ENCODE measurements at regions of chr13 and their contacts with region 1.

Region 1: DNA sequence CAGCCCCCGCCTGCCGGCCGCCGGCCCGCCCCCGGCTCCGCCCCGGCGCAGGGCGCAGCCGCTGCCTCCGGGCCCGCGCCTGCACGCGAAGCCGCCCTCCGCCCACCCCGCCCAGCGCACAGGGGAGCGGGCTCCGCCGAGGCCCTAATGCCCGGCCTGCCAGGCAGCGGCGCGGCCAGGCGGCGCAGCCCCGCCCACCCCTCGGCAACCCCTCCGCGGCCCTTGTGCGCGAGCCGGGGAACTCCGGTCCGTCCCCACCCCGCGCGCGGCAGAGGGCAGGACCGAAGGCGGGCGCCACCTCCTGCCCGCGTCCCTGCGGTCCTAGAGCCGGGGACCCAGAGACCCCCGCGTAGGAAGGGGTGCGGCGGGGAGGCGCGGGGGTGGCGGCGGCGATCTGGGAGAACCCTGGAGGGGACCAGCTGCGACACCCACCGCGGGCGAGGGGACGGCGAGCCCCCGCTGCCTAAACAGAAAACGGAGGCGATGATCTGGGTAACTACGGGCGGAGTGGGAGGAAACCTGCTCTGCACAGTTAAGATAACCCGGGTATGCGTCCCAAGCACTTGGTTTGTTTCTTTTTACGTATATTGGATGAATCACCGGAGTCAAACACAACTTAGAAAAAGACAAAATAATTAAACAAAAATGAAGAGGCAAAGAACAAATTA is 350 bp upstream of the USP12 start:
- DNase-seq: peak; percentile 92 to 94 (median 93)
- H3K4me3 ChIP-seq: peak overlapping the region; percentile 15 to 63
- H3K4me3 Mint-ChIP-seq: peak overlapping the region; percentile 82 to 96 (median 90)
- H3K27ac ChIP-seq: peak overlapping the region; percentile 95
- H3K27ac Mint-ChIP-seq: peak overlapping the region; percentile 84 to 99 (median 96)
- H3K4me1 ChIP-seq: peaks cover 37% of the 10 kb centered on the region
- H3K4me1 Mint-ChIP-seq: peaks cover 31 to 46% (median 39%) of the 10 kb centered on the region in 4 donors
- H3K27me3 ChIP-seq: no peaks in the 10 kb centered on the region
- H3K27me3 Mint-ChIP-seq: no peaks in the 10 kb centered on the region

Region 2: DNA sequence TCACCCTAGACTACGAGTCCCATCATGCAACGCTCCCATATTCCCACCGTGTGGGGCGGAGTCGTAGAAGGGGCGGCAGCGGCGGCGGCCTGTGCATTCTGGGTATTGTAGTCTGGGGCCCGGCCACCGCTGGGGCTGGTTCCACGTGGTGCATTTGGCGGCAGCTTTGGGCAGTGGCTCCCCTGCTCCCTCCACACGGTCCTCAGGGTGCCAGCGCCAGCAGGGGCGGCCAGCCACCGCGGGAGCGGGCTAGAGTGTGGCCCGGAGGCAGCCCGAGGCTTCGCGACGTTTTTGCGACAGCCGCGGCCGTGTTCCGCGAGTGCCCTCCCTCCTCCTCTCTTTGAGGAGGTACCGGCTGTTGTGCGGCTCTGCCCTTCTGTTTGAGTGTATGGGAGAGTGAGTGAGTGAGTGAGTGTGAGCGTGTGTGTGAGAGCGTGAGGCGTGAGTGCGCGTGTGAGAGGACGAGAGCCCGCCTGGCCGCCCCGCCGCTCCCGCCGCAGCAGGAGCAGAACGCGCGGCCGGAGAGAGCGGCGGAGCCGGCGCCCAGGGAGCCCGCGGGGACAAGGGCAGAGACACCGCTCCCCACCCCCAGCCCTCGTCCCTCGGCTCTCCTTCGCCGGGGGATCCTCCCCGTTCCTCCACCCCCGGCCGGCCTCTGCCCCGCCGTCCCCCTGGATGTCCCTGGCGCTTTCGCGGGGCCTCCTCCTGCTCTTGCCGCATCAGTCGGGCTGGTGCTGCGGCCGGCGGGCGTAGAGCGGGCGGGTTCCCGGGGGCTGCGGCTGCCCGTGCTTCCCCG is 918.0 kb before region 1 on chr13 and contains the start of gene CDK8:
- CTCF ChIA-PET with region 1: no interaction called
- POLR2A ChIA-PET with region 1: no interaction called
- intact Hi-C with region 1: loop called (anchors 5 kb)
- DNase-seq: peak; percentile 91 to 95 (median 92)
- H3K4me3 ChIP-seq: peak within 1 kb of the TSS; percentile 55 to 87
- H3K4me3 Mint-ChIP-seq: peak within 1 kb of the TSS; percentile 91 to 100 (median 94)
- H3K27ac ChIP-seq: peak within 1 kb of the TSS; percentile 58
- H3K27ac Mint-ChIP-seq: peak within 1 kb of the TSS; percentile 86 to 99 (median 93)
- H3K4me1 ChIP-seq: peaks cover 18% of the 10 kb centered on the region
- H3K4me1 Mint-ChIP-seq: peaks cover 29 to 44% (median 30%) of the 10 kb centered on the region in 4 donors
- H3K27me3 ChIP-seq: no peaks in the 10 kb centered on the region
- H3K27me3 Mint-ChIP-seq: peaks cover 0 to 1% of the 10 kb centered on the region in 2 donors
- total RNA-seq, gene CDK8: 10.4 to 11.7 TPM

Region 3: GRCh38 chr13:26996965-26997752 is 174.8 kb before region 1 on chr13:
- CTCF ChIA-PET with region 1: no interaction called
- POLR2A ChIA-PET with region 1: no interaction called
- intact Hi-C with region 1: no loop called
- DNase-seq: no peak
- H3K4me3 ChIP-seq: no peak overlapping the region
- H3K4me3 Mint-ChIP-seq: no peak overlapping the region
- H3K27ac ChIP-seq: no peak overlapping the region
- H3K27ac Mint-ChIP-seq: peak overlapping the region in 1 of 7 donors; percentile 22
- H3K4me1 ChIP-seq: no peaks in the 10 kb centered on the region
- H3K4me1 Mint-ChIP-seq: no peaks in the 10 kb centered on the region
- H3K27me3 ChIP-seq: no peaks in the 10 kb centered on the region
- H3K27me3 Mint-ChIP-seq: peaks cover 6 to 35% of the 10 kb centered on the region in 2 donors

Region 4: GRCh38 chr13:27130979-27131623 is 40.9 kb before region 1 on chr13:
- CTCF ChIA-PET with region 1: no interaction called
- POLR2A ChIA-PET with region 1: interaction called, 5 read pairs
- intact Hi-C with region 1: loop called (anchors 1 kb)
- DNase-seq: peak; percentile 49 to 89 (median 63)
- H3K4me3 ChIP-seq: no peak overlapping the region
- H3K4me3 Mint-ChIP-seq: peak overlapping the region; percentile 48 to 78 (median 57)
- H3K27ac ChIP-seq: peak overlapping the region; percentile 33
- H3K27ac Mint-ChIP-seq: peak overlapping the region; percentile 62 to 89 (median 85)
- H3K4me1 ChIP-seq: peaks cover 68% of the 10 kb centered on the region
- H3K4me1 Mint-ChIP-seq: peaks cover 61 to 89% (median 75%) of the 10 kb centered on the region in 4 donors
- H3K27me3 ChIP-seq: no peaks in the 10 kb centered on the region
- H3K27me3 Mint-ChIP-seq: no peaks in the 10 kb centered on the region

Region 5: GRCh38 chr13:27251166-27252091 is 79.5 kb after region 1 on chr13 and contains the start of gene RPL21:
- CTCF ChIA-PET with region 1: no interaction called
- POLR2A ChIA-PET with region 1: interaction called, 9 read pairs
- intact Hi-C with region 1: loop called (anchors 1 kb)
- DNase-seq: peak; percentile 92 to 95 (median 93)
- H3K4me3 ChIP-seq: peak within 1 kb of the TSS; percentile 84 to 98
- H3K4me3 Mint-ChIP-seq: peak within 1 kb of the TSS; percentile 93 to 99 (median 96)
- H3K27ac ChIP-seq: peak within 1 kb of the TSS; percentile 99
- H3K27ac Mint-ChIP-seq: peak within 1 kb of the TSS; percentile 98 to 100 (median 100)
- H3K4me1 ChIP-seq: peaks cover 44% of the 10 kb centered on the region
- H3K4me1 Mint-ChIP-seq: peaks cover 34 to 74% (median 54%) of the 10 kb centered on the region in 4 donors
- H3K27me3 ChIP-seq: no peaks in the 10 kb centered on the region
- H3K27me3 Mint-ChIP-seq: no peaks in the 10 kb centered on the region
- total RNA-seq, gene RPL21: 2,008 to 2,177 TPM

Region 6: GRCh38 chr13:27424246-27425157 is 252.5 kb after region 1 on chr13 and contains the start of gene GTF3A:
- CTCF ChIA-PET with region 1: no interaction called
- POLR2A ChIA-PET with region 1: no interaction called
- intact Hi-C with region 1: loop called (anchors 1 kb)
- DNase-seq: peak; percentile 85 to 96 (median 92)
- H3K4me3 ChIP-seq: peak within 1 kb of the TSS; percentile 66 to 89
- H3K4me3 Mint-ChIP-seq: peak within 1 kb of the TSS; percentile 87 to 96 (median 94)
- H3K27ac ChIP-seq: peak within 1 kb of the TSS; percentile 95
- H3K27ac Mint-ChIP-seq: peak within 1 kb of the TSS; percentile 89 to 99 (median 97)
- H3K4me1 ChIP-seq: peaks cover 51% of the 10 kb centered on the region
- H3K4me1 Mint-ChIP-seq: peaks cover 27 to 53% (median 40%) of the 10 kb centered on the region in 4 donors
- H3K27me3 ChIP-seq: no peaks in the 10 kb centered on the region
- H3K27me3 Mint-ChIP-seq: no peaks in the 10 kb centered on the region
- total RNA-seq, gene GTF3A: 225 to 236 TPM

Measured in CD4-positive, alpha-beta memory T cell (primary cell).